GM12878 (cell line): ENCODE measurements at regions of chr3 and their contacts with region 1.

Region 1: DNA sequence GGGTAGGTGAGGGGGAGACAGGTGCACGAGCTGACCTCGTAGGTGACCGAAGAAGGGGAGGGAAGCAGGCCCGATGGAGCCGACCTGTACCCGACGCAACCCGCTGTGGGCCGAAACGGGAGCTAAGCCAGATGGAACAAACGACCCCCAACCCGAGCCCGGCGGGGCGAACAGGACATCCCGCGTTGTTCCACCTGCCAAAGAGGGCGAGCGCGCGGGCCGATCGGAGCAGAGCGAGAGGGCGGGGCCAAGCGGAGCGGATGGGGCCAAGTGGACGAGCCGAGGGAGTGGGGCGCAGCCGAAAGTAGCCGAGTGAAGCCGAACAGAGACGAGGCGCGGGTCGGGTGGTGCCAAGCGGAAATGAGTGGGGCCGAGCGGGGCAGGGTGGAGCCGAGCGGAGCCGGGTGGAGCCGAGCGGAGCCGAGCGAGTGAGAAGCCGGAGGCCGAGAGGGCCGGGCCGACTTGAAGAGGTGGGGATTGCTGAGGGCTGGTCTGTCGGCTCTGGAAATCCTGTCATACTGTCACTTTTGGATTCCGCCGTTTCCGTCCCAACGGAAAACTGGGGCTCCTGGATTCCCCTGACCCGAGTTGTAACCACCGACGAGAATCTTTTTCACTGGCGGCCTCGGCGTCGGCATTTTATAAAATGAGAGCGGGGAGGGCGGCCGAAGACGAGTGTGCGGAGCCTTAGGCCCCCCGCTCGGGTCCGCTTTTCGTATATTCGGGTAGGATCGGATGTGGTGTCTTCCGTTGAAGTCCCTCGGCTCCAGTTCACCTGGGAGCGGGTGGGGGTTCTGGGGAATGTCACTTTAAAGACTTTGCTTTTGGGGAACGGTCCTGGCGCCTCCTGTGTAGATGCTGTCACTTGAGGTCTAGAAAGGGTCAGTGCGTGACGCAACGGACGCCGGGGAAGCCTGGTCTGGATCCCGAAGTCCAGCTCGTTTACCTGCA is 15.6 kb upstream of the WNT7A start:
- DNase-seq: peak; percentile 47
- ATAC-seq: peak; percentile 100
- H3K4me3 ChIP-seq: peak overlapping the region; percentile 67
- H3K27ac ChIP-seq: no peak overlapping the region
- H3K4me1 ChIP-seq: no peaks in the 10 kb centered on the region
- H3K27me3 ChIP-seq: peaks cover 0 to 3% of the 10 kb centered on the region in 2 experiments; a peak in 1 of 4 replicates
- CTCF ChIP-seq: no peak
- EP300 ChIP-seq: no peak
- POLR2A ChIP-seq: no peak
- RAD21 ChIP-seq: no peak

Region 2: GRCh38 chr3:13884851-13885703 is 10.4 kb before region 1 on chr3:
- CTCF ChIA-PET with region 1: interaction called, 13 read pairs
- POLR2A ChIA-PET with region 1: no interaction called
- RAD21 ChIA-PET with region 1: interaction called, 3 read pairs
- SMC1A ChIA-PET with region 1: no interaction called
- in situ Hi-C with region 1: no loop called
- intact Hi-C with region 1: no loop called
- DNase-seq: no peak
- ATAC-seq: peak; percentile 93
- H3K4me3 ChIP-seq: no peak overlapping the region
- H3K27ac ChIP-seq: no peak overlapping the region
- H3K4me1 ChIP-seq: no peaks in the 10 kb centered on the region
- H3K27me3 ChIP-seq: peaks cover 1 to 6% of the 10 kb centered on the region in 2 experiments
- CTCF ChIP-seq: peak; percentile 66 to 84 (median 81)
- EP300 ChIP-seq: no peak
- POLR2A ChIP-seq: no peak
- RAD21 ChIP-seq: peak; percentile 66

Region 3: DNA sequence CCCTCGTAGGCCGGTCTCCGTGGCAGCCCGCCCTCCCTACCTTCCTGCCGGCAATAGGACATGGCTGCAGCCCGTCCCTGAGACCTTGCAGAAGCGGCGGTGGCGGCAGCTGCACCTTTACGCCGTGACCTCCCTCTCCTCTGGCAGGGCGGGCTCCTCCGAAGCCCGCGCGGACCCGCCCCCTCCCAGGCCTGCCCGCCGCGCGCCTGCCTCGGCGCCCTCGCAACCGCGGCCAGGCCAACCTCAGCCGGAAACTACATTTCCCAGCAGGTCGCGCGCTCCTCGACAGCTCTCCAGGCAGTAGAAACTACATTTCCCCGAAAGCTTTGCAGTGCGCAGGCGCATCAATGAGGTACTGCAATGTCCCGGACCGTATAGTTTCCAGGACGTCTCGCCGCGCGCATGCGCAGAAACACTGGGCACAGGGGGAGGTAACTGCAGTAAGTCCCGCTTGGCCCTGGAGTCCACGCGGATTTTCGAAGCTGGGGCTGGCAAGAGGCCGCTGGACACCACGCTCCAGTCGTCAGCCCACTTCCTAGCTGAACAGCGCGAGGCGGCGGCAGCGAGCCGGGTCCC is 229.3 kb after region 1 on chr3 and contains the starts of genes CHCHD4 and TMEM43:
- CTCF ChIA-PET with region 1: interaction called, 9 read pairs
- POLR2A ChIA-PET with region 1: no interaction called
- RAD21 ChIA-PET with region 1: interaction called, 11 read pairs
- SMC1A ChIA-PET with region 1: interaction called, 8 read pairs
- in situ Hi-C with region 1: loop called (anchors 5 kb)
- intact Hi-C with region 1: loop called (anchors 5 kb)
- DNase-seq: peak; percentile 95
- ATAC-seq: peak; percentile 90
- H3K4me3 ChIP-seq: peak within 1 kb of the TSS; percentile 93
- H3K27ac ChIP-seq: peak within 1 kb of the TSS; percentile 81
- H3K4me1 ChIP-seq: peaks cover 8% of the 10 kb centered on the region
- H3K27me3 ChIP-seq: no peaks in the 10 kb centered on the region
- CTCF ChIP-seq: no peak
- EP300 ChIP-seq: no peak
- POLR2A ChIP-seq: peak; percentile 79
- RAD21 ChIP-seq: no peak
- polyA plus RNA-seq, gene CHCHD4: 37.9 to 46.8 TPM
- polyA plus RNA-seq, gene TMEM43: 7.2 to 7.6 TPM

Region 4: DNA sequence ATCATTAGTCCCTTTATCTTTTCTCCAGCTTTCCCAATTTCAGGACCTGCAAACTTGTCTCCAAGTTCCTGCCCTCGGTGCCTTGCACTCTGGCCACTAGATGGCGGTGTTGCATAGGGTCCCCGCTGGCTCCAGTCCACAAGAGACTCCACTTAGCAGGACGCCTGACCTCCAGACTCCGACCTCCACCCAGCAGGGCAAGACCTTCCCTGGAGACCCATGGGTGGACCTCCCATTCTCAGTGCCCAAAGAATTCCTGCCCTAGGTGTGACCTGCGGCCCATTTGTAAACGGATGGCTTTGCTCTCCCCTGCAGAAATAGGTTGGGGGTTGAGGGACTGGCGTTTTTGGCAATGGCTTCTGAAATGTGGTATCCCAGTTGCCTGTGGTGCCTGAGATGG is 365.8 kb after region 1 on chr3:
- CTCF ChIA-PET with region 1: interaction called, 10 read pairs
- POLR2A ChIA-PET with region 1: no interaction called
- RAD21 ChIA-PET with region 1: interaction called, 4 read pairs
- SMC1A ChIA-PET with region 1: interaction called, 4 read pairs
- in situ Hi-C with region 1: no loop called
- intact Hi-C with region 1: loop called (anchors 2 kb)
- DNase-seq: peak; percentile 16
- ATAC-seq: peak; percentile 94
- H3K4me3 ChIP-seq: no peak overlapping the region
- H3K27ac ChIP-seq: no peak overlapping the region
- H3K4me1 ChIP-seq: no peaks in the 10 kb centered on the region
- H3K27me3 ChIP-seq: peaks cover 0 to 4% of the 10 kb centered on the region in 2 experiments; a peak in 2 of 4 replicates
- CTCF ChIP-seq: peak; percentile 89 to 95 (median 94); a peak in 5 of 6 replicates
- EP300 ChIP-seq: no peak
- POLR2A ChIP-seq: no peak
- RAD21 ChIP-seq: peak; percentile 98

Region 5: DNA sequence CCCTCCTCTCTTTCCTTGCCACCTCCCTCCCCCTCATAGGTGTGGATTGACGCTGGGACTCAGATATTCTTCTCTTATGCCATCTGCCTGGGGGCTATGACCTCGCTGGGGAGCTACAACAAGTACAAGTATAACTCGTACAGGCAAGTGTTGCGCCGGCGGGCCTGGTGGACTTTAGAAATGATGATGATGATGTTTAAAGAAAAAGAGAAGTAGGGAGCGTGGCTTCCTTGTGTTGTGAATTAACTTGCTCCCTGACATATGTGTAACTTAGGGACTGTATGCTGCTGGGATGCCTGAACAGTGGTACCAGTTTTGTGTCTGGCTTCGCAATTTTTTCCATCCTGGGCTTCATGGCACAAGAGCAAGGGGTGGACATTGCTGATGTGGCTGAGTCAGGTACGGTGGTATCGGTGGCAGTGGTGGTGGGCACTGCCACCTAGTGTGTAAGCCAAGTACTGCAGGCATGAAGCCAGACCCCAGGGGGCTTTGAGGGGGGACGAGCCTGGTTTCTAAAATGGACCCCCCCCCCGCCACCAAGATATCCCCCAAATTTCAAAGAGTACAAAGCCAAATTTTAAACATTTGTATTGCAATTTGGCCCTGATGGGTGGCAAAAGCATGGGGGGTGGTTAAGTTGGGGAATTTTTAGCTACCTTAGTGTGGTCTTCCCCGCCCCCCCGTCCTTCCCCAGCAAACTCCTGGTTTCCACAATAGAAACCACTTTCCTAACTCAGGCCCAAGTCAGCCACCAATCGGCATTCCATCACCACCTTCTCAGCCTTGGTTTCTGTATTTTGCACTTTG is 572.6 kb after region 1 on chr3:
- CTCF ChIA-PET with region 1: interaction called, 10 read pairs
- POLR2A ChIA-PET with region 1: no interaction called
- RAD21 ChIA-PET with region 1: interaction called, 6 read pairs
- SMC1A ChIA-PET with region 1: interaction called, 5 read pairs
- in situ Hi-C with region 1: loop called (anchors 5 kb)
- intact Hi-C with region 1: loop called (anchors 5 kb)
- DNase-seq: no peak
- ATAC-seq: peak; percentile 89
- H3K4me3 ChIP-seq: no peak overlapping the region
- H3K27ac ChIP-seq: no peak overlapping the region
- H3K4me1 ChIP-seq: no peaks in the 10 kb centered on the region
- H3K27me3 ChIP-seq: no peaks in the 10 kb centered on the region
- CTCF ChIP-seq: peak; percentile 67 to 85 (median 84)
- EP300 ChIP-seq: no peak
- POLR2A ChIP-seq: no peak
- RAD21 ChIP-seq: peak; percentile 79